ENCODE measurements at regions of chr4 and their contacts with region 1.

Region 1: GRCh38 chr4:57243076-57243475 is 132.9 kb upstream of the IGFBP7 start:
- DNase-seq: no peak
- H3K4me3 ChIP-seq: no peak overlapping the region
- H3K27ac ChIP-seq: no peak overlapping the region
- H3K4me1 ChIP-seq: no peaks in the 10 kb centered on the region
- H3K27me3 ChIP-seq: peaks cover 0 to 1% of the 10 kb centered on the region in 2 donors
- CTCF ChIP-seq: no peak
- POLR2A ChIP-seq: no peak

Region 2: DNA sequence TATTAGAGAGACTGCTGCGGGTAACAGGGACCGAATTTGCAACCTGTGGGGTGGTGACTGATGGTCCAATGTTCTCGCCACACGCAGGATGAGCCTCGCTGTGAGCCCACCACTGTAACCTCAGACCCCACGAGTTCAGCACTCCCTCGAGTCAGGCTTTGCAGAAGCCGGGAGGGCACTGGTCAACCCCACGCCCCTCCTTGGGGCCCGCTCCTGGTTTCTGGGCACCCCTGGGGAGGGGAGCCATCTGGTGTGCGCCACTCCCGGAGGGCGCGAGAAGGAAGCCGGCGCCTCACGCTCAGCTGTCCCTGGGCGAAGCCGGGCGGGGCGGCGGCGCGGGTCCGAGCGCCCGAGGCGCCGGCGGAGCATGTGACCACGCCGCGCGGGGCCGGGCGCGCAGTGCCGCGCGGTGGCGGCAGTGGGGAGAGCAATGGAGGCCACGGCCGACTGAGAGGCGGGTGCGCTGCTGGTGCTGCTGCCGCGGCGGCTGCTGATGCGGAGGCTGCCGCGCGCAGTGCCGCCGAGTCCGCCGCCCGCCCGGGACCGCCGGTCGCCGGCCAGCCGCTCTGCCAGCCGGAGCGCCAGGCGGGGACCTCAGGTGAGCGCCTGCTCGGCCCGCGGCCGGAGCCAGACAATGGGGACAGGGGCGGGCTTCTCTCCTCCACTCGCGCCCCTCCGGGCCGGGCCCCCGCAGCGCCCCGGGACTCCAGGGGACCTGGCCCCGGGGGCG is 1194.2 kb before region 1 on chr4:
- intact Hi-C with region 1: no loop called
- DNase-seq: no peak
- H3K4me3 ChIP-seq: peak overlapping the region; percentile 51 to 78 (median 62)
- H3K27ac ChIP-seq: no peak overlapping the region
- H3K4me1 ChIP-seq: peaks cover 0 to 3% of the 10 kb centered on the region in 2 donors
- H3K27me3 ChIP-seq: peaks cover 0 to 19% of the 10 kb centered on the region in 2 donors
- CTCF ChIP-seq: peak in 1 of 3 donors; percentile 27
- POLR2A ChIP-seq: no peak

Region 3: DNA sequence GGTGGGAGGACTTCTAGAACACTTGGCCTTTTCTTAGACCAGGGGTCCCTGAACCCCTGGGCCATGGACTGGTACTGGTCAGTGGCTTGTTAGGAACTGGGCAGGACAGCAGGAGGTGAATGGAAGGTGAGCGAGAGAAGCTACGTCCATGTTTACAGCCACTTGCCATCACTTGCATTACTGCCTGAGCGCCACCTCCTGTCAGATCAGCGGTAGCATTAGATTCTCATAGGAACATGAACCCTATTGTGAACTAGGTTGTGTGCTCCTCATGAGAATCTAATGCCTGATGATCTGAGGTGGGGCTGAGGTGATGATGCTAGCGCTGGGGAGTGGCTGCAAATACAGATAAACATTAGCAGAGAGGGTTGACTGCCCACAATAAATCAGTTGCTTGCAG is 31.9 kb before region 1 on chr4:
- intact Hi-C with region 1: loop called (anchors 1 kb)
- DNase-seq: no peak
- H3K4me3 ChIP-seq: no peak overlapping the region
- H3K27ac ChIP-seq: no peak overlapping the region
- H3K4me1 ChIP-seq: no peaks in the 10 kb centered on the region
- H3K27me3 ChIP-seq: no peaks in the 10 kb centered on the region
- CTCF ChIP-seq: no peak
- POLR2A ChIP-seq: no peak

Region 4: GRCh38 chr4:57231781-57232180 is 11.3 kb before region 1 on chr4:
- intact Hi-C with region 1: no loop called
- DNase-seq: no peak
- H3K4me3 ChIP-seq: no peak overlapping the region
- H3K27ac ChIP-seq: no peak overlapping the region
- H3K4me1 ChIP-seq: no peaks in the 10 kb centered on the region
- H3K27me3 ChIP-seq: no peaks in the 10 kb centered on the region
- CTCF ChIP-seq: no peak
- POLR2A ChIP-seq: no peak